Naive thymus-derived CD4-positive, alpha-beta T cell (primary cell): ENCODE measurements at regions of chr1 and their contacts with region 1.

Region 1: GRCh38 chr1:101309334-101310311 is 72.8 kb downstream of the S1PR1 start:
- DNase-seq: peak; percentile 53 to 95 (median 91)
- ATAC-seq: peak; percentile 86
- H3K4me3 ChIP-seq: peak overlapping the region; percentile 42
- H3K4me3 Mint-ChIP-seq: peak overlapping the region; percentile 74 to 89 (median 85)
- H3K27ac ChIP-seq: peak overlapping the region; percentile 92
- H3K27ac Mint-ChIP-seq: peak overlapping the region; percentile 93 to 99 (median 98)
- H3K4me1 ChIP-seq: peaks cover 46 to 53% of the 10 kb centered on the region in 2 donors
- H3K4me1 Mint-ChIP-seq: peaks cover 43 to 79% (median 66%) of the 10 kb centered on the region in 7 donors
- H3K27me3 ChIP-seq: no peaks in the 10 kb centered on the region
- H3K27me3 Mint-ChIP-seq: peaks cover 0 to 22% (median 0%) of the 10 kb centered on the region in 5 donors

Region 2: DNA sequence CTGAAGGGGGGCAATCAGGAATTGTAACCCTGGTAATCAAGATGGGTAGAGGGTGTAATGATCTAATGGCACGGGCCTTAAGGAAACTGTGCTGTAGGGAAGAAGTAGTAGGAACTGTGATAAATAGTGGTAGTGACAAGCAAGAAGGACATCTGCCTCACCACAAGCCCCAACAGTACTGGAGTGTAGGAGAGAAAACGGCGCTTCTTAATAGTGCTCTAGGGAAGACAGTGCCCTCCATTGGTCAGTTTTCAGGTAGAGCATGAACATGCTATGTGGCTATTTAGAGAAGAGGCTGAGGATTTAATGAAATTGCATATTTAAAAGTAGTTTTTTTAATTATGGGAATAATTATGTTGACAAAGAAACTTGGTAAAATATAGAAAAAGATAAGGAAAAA is 381.5 kb before region 1 on chr1:
- CTCF ChIA-PET with region 1: interaction called, 5 read pairs
- POLR2A ChIA-PET with region 1: interaction called, 9 read pairs
- intact Hi-C with region 1: loop called in 1 of 2 experiments (anchors 1 kb)
- DNase-seq: peak in 1 of 9 donors; percentile 9
- ATAC-seq: peak; percentile 30
- H3K4me3 ChIP-seq: peak overlapping the region; percentile 15
- H3K4me3 Mint-ChIP-seq: no peak overlapping the region
- H3K27ac ChIP-seq: peak overlapping the region; percentile 74
- H3K27ac Mint-ChIP-seq: no peak overlapping the region
- H3K4me1 ChIP-seq: peaks cover 76 to 84% of the 10 kb centered on the region in 2 donors
- H3K4me1 Mint-ChIP-seq: peaks cover 26 to 61% (median 39%) of the 10 kb centered on the region in 7 donors
- H3K27me3 ChIP-seq: no peaks in the 10 kb centered on the region
- H3K27me3 Mint-ChIP-seq: no peaks in the 10 kb centered on the region

Region 3: GRCh38 chr1:101025657-101026504 is 283.7 kb before region 1 on chr1 and contains the start of gene DPH5:
- CTCF ChIA-PET with region 1: no interaction called
- POLR2A ChIA-PET with region 1: no interaction called
- intact Hi-C with region 1: no loop called
- DNase-seq: peak; percentile 72 to 91 (median 87)
- ATAC-seq: peak; percentile 99
- H3K4me3 ChIP-seq: peak within 1 kb of the TSS; percentile 85
- H3K4me3 Mint-ChIP-seq: peak within 1 kb of the TSS; percentile 89 to 97 (median 94)
- H3K27ac ChIP-seq: peak within 1 kb of the TSS; percentile 88
- H3K27ac Mint-ChIP-seq: peak within 1 kb of the TSS; percentile 92 to 100 (median 98)
- H3K4me1 ChIP-seq: peaks cover 14 to 44% of the 10 kb centered on the region in 2 donors
- H3K4me1 Mint-ChIP-seq: peaks cover 42 to 95% (median 78%) of the 10 kb centered on the region in 7 donors
- H3K27me3 ChIP-seq: no peaks in the 10 kb centered on the region
- H3K27me3 Mint-ChIP-seq: no peaks in the 10 kb centered on the region
- total RNA-seq, gene DPH5: 26.3 to 72.2 (median 45.3) TPM

Region 4: GRCh38 chr1:101288491-101288944 is 21.1 kb before region 1 on chr1:
- CTCF ChIA-PET with region 1: interaction called, 11 read pairs
- POLR2A ChIA-PET with region 1: interaction called, 33 read pairs
- intact Hi-C with region 1: loop called in 1 of 2 experiments (anchors 2 kb)
- DNase-seq: peak in 8 of 9 donors; percentile 48 to 83 (median 78)
- ATAC-seq: peak; percentile 83
- H3K4me3 ChIP-seq: no peak overlapping the region
- H3K4me3 Mint-ChIP-seq: peak overlapping the region in 6 of 10 donors; percentile 4 to 47 (median 20)
- H3K27ac ChIP-seq: peak overlapping the region; percentile 20
- H3K27ac Mint-ChIP-seq: peak overlapping the region; percentile 63 to 93 (median 80)
- H3K4me1 ChIP-seq: peaks cover 66 to 68% of the 10 kb centered on the region in 2 donors
- H3K4me1 Mint-ChIP-seq: peaks cover 55 to 82% (median 73%) of the 10 kb centered on the region in 7 donors
- H3K27me3 ChIP-seq: no peaks in the 10 kb centered on the region
- H3K27me3 Mint-ChIP-seq: no peaks in the 10 kb centered on the region

Region 5: DNA sequence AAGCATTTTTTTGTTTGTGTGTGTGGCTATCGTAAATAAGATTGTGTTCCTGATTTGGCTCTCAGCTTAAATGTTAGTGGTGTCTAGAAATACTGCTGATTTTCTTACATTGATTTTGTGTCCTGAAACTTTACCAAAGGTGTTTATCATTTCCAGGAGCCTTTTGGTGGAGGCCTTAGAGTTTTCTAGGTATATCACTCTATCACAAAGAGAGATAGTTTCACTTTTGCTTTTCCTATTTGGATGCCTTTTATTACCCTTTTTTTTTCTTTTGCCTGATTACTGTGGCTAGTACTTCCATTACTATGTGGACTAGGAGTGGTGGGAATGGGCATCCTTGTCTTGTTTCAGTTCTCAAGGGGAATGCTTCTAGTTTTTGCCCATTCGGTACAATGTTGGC is 36.8 kb after region 1 on chr1:
- CTCF ChIA-PET with region 1: interaction called, 26 read pairs
- POLR2A ChIA-PET with region 1: interaction called, 15 read pairs
- intact Hi-C with region 1: loop called (anchors 2 kb)
- DNase-seq: no peak
- ATAC-seq: no peak
- H3K4me3 ChIP-seq: peak overlapping the region; percentile 10
- H3K4me3 Mint-ChIP-seq: peak overlapping the region; percentile 3 to 82 (median 69)
- H3K27ac ChIP-seq: peak overlapping the region; percentile 38
- H3K27ac Mint-ChIP-seq: peak overlapping the region; percentile 2 to 86 (median 75)
- H3K4me1 ChIP-seq: peaks cover 6 to 8% of the 10 kb centered on the region in 2 donors
- H3K4me1 Mint-ChIP-seq: peaks cover 21 to 58% (median 31%) of the 10 kb centered on the region in 7 donors
- H3K27me3 ChIP-seq: no peaks in the 10 kb centered on the region
- H3K27me3 Mint-ChIP-seq: peaks cover 0 to 7% (median 0%) of the 10 kb centered on the region in 5 donors

Region 6: DNA sequence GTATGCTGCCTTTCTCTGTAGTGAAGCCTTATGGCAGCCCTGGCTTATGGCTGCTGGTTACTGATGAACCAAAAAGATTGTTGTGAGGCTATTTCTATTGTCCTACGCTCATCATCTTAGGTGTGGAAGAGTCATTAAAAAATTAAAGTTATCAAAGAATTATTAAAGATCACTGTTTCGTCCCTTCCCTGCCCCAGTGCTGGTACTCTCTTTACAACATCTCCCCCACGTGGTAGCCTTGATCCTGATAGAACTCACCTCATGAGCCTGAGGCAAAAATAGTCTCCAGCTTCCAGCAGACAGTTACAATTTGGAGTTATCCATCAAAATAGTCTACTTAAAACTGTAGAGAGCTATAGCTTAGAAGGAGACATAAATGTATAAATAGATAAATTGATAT is 128.7 kb after region 1 on chr1:
- CTCF ChIA-PET with region 1: interaction called, 4 read pairs
- POLR2A ChIA-PET with region 1: no interaction called
- intact Hi-C with region 1: loop called in 1 of 2 experiments (anchors 1 kb)
- DNase-seq: no peak
- ATAC-seq: no peak
- H3K4me3 ChIP-seq: no peak overlapping the region
- H3K4me3 Mint-ChIP-seq: no peak overlapping the region
- H3K27ac ChIP-seq: no peak overlapping the region
- H3K27ac Mint-ChIP-seq: no peak overlapping the region
- H3K4me1 ChIP-seq: no peaks in the 10 kb centered on the region
- H3K4me1 Mint-ChIP-seq: no peaks in the 10 kb centered on the region
- H3K27me3 ChIP-seq: no peaks in the 10 kb centered on the region
- H3K27me3 Mint-ChIP-seq: peaks cover 0 to 33% (median 3%) of the 10 kb centered on the region in 5 donors

Region 7: GRCh38 chr1:101567582-101568189 is 258.1 kb after region 1 on chr1:
- CTCF ChIA-PET with region 1: no interaction called
- POLR2A ChIA-PET with region 1: no interaction called
- intact Hi-C with region 1: loop called in 1 of 2 experiments (anchors 1 kb)
- DNase-seq: peak in 7 of 9 donors; percentile 18 to 53 (median 42)
- ATAC-seq: peak; percentile 80
- H3K4me3 ChIP-seq: no peak overlapping the region
- H3K4me3 Mint-ChIP-seq: no peak overlapping the region
- H3K27ac ChIP-seq: no peak overlapping the region
- H3K27ac Mint-ChIP-seq: no peak overlapping the region
- H3K4me1 ChIP-seq: no peaks in the 10 kb centered on the region
- H3K4me1 Mint-ChIP-seq: peaks cover 0 to 1% (median 0%) of the 10 kb centered on the region in 7 donors
- H3K27me3 ChIP-seq: no peaks in the 10 kb centered on the region
- H3K27me3 Mint-ChIP-seq: peaks cover 0 to 31% (median 15%) of the 10 kb centered on the region in 5 donors

Region 8: DNA sequence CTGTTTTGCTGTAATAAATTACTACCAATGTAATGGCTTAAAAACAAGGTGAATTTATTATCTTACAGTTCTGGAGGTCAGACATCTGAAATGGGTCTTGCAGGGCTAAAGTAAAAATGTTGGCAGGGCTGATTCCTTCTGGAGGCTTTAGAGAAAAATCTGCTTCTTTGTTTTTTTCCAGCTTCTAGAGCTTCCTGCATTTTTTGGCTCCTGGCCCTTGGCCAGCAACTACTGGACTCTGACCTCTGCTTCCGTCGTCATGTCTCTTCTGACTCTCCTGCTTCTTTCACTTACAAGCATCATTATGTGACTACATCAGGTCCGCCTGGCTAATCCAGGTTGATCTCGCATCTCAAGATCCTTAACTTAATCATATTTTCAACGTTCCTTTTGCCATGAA is 278.1 kb after region 1 on chr1:
- CTCF ChIA-PET with region 1: no interaction called
- POLR2A ChIA-PET with region 1: no interaction called
- intact Hi-C with region 1: no loop called
- DNase-seq: no peak
- ATAC-seq: no peak
- H3K4me3 ChIP-seq: no peak overlapping the region
- H3K4me3 Mint-ChIP-seq: no peak overlapping the region
- H3K27ac ChIP-seq: no peak overlapping the region
- H3K27ac Mint-ChIP-seq: no peak overlapping the region
- H3K4me1 ChIP-seq: no peaks in the 10 kb centered on the region
- H3K4me1 Mint-ChIP-seq: no peaks in the 10 kb centered on the region
- H3K27me3 ChIP-seq: peaks cover 0 to 4% of the 10 kb centered on the region in 2 donors
- H3K27me3 Mint-ChIP-seq: peaks cover 5 to 28% (median 23%) of the 10 kb centered on the region in 5 donors